OCI-LY7 (cell line): ENCODE measurements at regions of chr2 and their contacts with region 1.

Region 1: DNA sequence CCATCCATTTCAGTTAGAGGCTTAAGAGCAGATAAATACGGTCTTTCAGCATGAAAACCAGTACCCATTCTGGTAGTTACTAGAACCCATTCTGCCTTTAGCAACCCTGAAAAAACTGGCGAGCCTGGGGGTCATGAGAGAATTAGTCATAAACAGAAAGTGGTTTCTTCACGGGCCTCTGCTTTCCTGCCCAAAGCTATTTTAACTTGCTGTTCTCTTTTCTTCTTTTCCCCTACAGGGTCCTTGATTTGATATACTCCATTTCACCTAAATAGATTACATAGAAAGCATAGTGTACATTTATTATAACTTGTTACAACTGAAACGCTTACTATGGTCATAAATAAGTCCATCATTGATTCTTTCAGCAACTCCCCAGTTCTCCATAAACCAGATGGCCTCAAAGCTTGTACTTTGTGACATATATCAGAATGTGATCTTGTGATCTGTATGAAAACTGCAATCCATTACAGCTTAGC is 48.3 kb downstream of the WDFY1 start:
- DNase-seq: peak; percentile 63
- H3K4me3 ChIP-seq: peak overlapping the region; percentile 54
- H3K27ac ChIP-seq: peak overlapping the region; percentile 63
- H3K4me1 ChIP-seq: peaks cover 52% of the 10 kb centered on the region
- CTCF ChIP-seq: no peak

Region 2: GRCh38 chr2:223932816-223933800 is 36.2 kb after region 1 on chr2:
- CTCF ChIA-PET with region 1: no interaction called
- POLR2A ChIA-PET with region 1: interaction called, 10 read pairs
- intact Hi-C with region 1: no loop called
- DNase-seq: no peak
- H3K4me3 ChIP-seq: no peak overlapping the region
- H3K27ac ChIP-seq: no peak overlapping the region
- H3K4me1 ChIP-seq: no peaks in the 10 kb centered on the region
- CTCF ChIP-seq: no peak

Region 3: GRCh38 chr2:223944703-223945531 is 48.0 kb after region 1 on chr2 and contains the start of gene WDFY1:
- CTCF ChIA-PET with region 1: interaction called, 4 read pairs
- POLR2A ChIA-PET with region 1: interaction called, 6 read pairs
- intact Hi-C with region 1: loop called (anchors 2 kb)
- DNase-seq: peak; percentile 89
- H3K4me3 ChIP-seq: peak within 1 kb of the TSS; percentile 84
- H3K27ac ChIP-seq: no peak within 1 kb of the TSS
- H3K4me1 ChIP-seq: peaks cover 28% of the 10 kb centered on the region
- CTCF ChIP-seq: no peak
- total RNA-seq, gene WDFY1: 45.3 and 46.6 TPM in 2 replicates

Region 4: GRCh38 chr2:223957092-223957851 is 60.4 kb after region 1 on chr2 and contains the start of gene MRPL44:
- CTCF ChIA-PET with region 1: no interaction called
- POLR2A ChIA-PET with region 1: interaction called, 6 read pairs
- intact Hi-C with region 1: loop called (anchors 5 kb)
- DNase-seq: peak; percentile 96
- H3K4me3 ChIP-seq: peak within 1 kb of the TSS; percentile 91
- H3K27ac ChIP-seq: peak within 1 kb of the TSS; percentile 29
- H3K4me1 ChIP-seq: peaks cover 82% of the 10 kb centered on the region
- CTCF ChIP-seq: no peak
- total RNA-seq, gene MRPL44: 25.4 and 36.2 TPM in 2 replicates